ENCODE measurements at regions of chr14 and their contacts with region 1.

Region 1: GRCh38 chr14:22852940-22853767 is 16.8 kb downstream of the MMP14 start:
- DNase-seq: peak; percentile 53
- H3K4me3 ChIP-seq: peak overlapping the region; percentile 31 to 67 (median 42)
- H3K27ac ChIP-seq: peak overlapping the region; percentile 67 to 89 (median 78)
- H3K4me1 ChIP-seq: peaks cover 36 to 56% (median 43%) of the 10 kb centered on the region in 3 donors
- H3K27me3 ChIP-seq: no peaks in the 10 kb centered on the region
- CTCF ChIP-seq: peak; percentile 91 to 97 (median 94)
- POLR2A ChIP-seq: no peak

Region 2: GRCh38 chr14:22570132-22570949 is 282.8 kb before region 1 on chr14:
- intact Hi-C with region 1: loop called (anchors 10 kb)
- DNase-seq: no peak
- H3K4me3 ChIP-seq: no peak overlapping the region
- H3K27ac ChIP-seq: peak overlapping the region; percentile 29 to 70 (median 50)
- H3K4me1 ChIP-seq: peaks cover 6 to 66% (median 24%) of the 10 kb centered on the region in 3 donors
- H3K27me3 ChIP-seq: no peaks in the 10 kb centered on the region
- CTCF ChIP-seq: peak; percentile 71 to 97 (median 94)
- POLR2A ChIP-seq: no peak

Region 3: GRCh38 chr14:22653012-22653621 is 200.0 kb before region 1 on chr14:
- intact Hi-C with region 1: loop called (anchors 10 kb)
- DNase-seq: no peak
- H3K4me3 ChIP-seq: no peak overlapping the region
- H3K27ac ChIP-seq: no peak overlapping the region
- H3K4me1 ChIP-seq: peaks cover 0 to 15% (median 8%) of the 10 kb centered on the region in 3 donors
- H3K27me3 ChIP-seq: no peaks in the 10 kb centered on the region
- CTCF ChIP-seq: peak in 5 of 6 experiments; percentile 76 to 90 (median 82)
- POLR2A ChIP-seq: no peak

Region 4: GRCh38 chr14:22778084-22778483 is 75.1 kb before region 1 on chr14:
- intact Hi-C with region 1: loop called (anchors 10 kb)
- DNase-seq: no peak
- H3K4me3 ChIP-seq: no peak overlapping the region
- H3K27ac ChIP-seq: no peak overlapping the region
- H3K4me1 ChIP-seq: no peaks in the 10 kb centered on the region
- H3K27me3 ChIP-seq: no peaks in the 10 kb centered on the region
- CTCF ChIP-seq: no peak
- POLR2A ChIP-seq: no peak